HCT116 (cell line): ENCODE measurements at regions of chr12 and their contacts with region 1.

Region 1: GRCh38 chr12:59403259-59403932 is 192.4 kb upstream of the SLC16A7 start:
- DNase-seq: peak; percentile 55
- ATAC-seq: peak; percentile 90
- H3K4me3 ChIP-seq: peak overlapping the region; percentile 13 to 15; a peak in 3 of 4 replicates
- H3K27ac ChIP-seq: no peak overlapping the region
- H3K4me1 ChIP-seq: no peaks in the 10 kb centered on the region
- H3K27me3 ChIP-seq: no peaks in the 10 kb centered on the region
- CTCF ChIP-seq: peak; percentile 50 to 85 (median 82); a peak in 5 of 6 replicates
- POLR2A ChIP-seq: no peak
- RAD21 ChIP-seq: peak; percentile 67

Region 2: GRCh38 chr12:59834659-59835474 is 431.5 kb after region 1 on chr12:
- CTCF ChIA-PET with region 1: interaction called, 7 read pairs
- POLR2A ChIA-PET with region 1: no interaction called
- RAD21 ChIA-PET with region 1: no interaction called
- intact Hi-C with region 1: loop called (anchors 5 kb)
- DNase-seq: peak; percentile 13
- ATAC-seq: peak; percentile 72; the same call in 1 of the 2 replicates
- H3K4me3 ChIP-seq: no peak overlapping the region
- H3K27ac ChIP-seq: no peak overlapping the region
- H3K4me1 ChIP-seq: no peaks in the 10 kb centered on the region
- H3K27me3 ChIP-seq: no peaks in the 10 kb centered on the region
- CTCF ChIP-seq: peak; percentile 52 to 77 (median 62); a peak in 5 of 6 replicates
- POLR2A ChIP-seq: no peak
- RAD21 ChIP-seq: peak; percentile 42; the same call in 1 of the 2 replicates